Panc1 (cell line): ENCODE measurements at regions of chr13 and their contacts with region 1.

Region 1: GRCh38 chr13:85828149-85828548 is 28.9 kb upstream of the SLITRK6 start:
- DNase-seq: no peak
- ATAC-seq: no peak
- H3K4me3 ChIP-seq: no peak overlapping the region
- H3K27ac ChIP-seq: no peak overlapping the region
- H3K4me1 ChIP-seq: no peaks in the 10 kb centered on the region
- H3K27me3 ChIP-seq: no peaks in the 10 kb centered on the region
- CTCF ChIP-seq: peak; percentile 54; the same call in 1 of the 2 replicates

Region 2: DNA sequence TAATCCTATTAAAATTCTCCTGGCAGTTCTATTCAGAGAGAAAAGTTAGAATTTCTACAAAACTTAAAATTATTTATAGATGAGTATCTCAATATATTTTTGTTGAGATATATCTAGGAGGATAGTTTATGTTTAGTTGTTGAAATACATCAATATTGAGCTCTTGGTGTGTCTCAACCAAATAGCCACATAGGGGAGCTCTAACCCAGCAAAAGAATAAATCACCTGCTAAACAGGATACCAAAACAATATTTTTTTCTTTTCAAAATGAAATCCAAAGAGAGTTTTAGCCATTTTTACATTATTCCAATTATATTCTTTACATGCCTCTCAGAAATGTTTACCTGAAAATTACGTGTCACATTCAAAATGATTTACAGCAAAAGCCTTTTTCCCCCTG is 983.7 kb before region 1 on chr13:
- CTCF ChIA-PET with region 1: no interaction called
- POLR2A ChIA-PET with region 1: no interaction called
- in situ Hi-C with region 1: no loop called
- intact Hi-C with region 1: loop called (anchors 5 kb)
- DNase-seq: no peak
- ATAC-seq: no peak
- H3K4me3 ChIP-seq: no peak overlapping the region
- H3K27ac ChIP-seq: no peak overlapping the region
- H3K4me1 ChIP-seq: no peaks in the 10 kb centered on the region
- H3K27me3 ChIP-seq: no peaks in the 10 kb centered on the region
- CTCF ChIP-seq: peak; percentile 42; the same call in 1 of the 2 replicates

Region 3: DNA sequence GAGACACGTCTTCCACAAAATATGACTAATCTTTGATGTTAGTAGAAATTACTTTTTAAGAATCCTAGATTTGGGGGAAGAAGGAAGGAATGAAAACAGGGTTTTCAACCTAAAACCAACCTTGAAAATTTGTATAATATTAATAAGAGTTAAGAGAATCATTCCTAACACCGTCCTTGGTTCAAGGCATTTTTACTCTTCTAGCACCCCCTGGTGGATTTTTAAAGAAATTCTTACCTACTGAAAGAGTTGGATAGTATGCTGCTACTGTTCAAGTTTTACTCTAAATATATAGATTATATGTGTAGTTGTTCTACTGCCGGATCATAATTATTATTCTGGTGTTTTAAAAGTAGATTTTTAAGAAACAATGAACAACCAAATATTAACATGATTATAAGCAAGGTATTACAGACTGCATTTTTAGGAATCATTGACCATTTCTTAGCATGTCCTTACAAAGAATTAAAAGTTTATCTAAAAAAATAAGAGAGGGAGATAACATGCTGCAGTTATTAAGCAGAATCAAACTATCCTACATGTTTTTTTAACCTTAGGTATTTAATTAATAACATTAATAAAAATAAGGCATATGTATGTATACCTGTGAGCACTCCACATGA is 21.5 kb before region 1 on chr13:
- CTCF ChIA-PET with region 1: no interaction called
- POLR2A ChIA-PET with region 1: no interaction called
- in situ Hi-C with region 1: no loop called
- intact Hi-C with region 1: no loop called
- DNase-seq: peak; percentile 17
- ATAC-seq: peak; percentile 82
- H3K4me3 ChIP-seq: no peak overlapping the region
- H3K27ac ChIP-seq: no peak overlapping the region
- H3K4me1 ChIP-seq: no peaks in the 10 kb centered on the region
- H3K27me3 ChIP-seq: no peaks in the 10 kb centered on the region
- CTCF ChIP-seq: peak; percentile 44; the same call in 1 of the 2 replicates